ENCODE measurements at regions of chr13 and their contacts with region 1.

Region 1: DNA sequence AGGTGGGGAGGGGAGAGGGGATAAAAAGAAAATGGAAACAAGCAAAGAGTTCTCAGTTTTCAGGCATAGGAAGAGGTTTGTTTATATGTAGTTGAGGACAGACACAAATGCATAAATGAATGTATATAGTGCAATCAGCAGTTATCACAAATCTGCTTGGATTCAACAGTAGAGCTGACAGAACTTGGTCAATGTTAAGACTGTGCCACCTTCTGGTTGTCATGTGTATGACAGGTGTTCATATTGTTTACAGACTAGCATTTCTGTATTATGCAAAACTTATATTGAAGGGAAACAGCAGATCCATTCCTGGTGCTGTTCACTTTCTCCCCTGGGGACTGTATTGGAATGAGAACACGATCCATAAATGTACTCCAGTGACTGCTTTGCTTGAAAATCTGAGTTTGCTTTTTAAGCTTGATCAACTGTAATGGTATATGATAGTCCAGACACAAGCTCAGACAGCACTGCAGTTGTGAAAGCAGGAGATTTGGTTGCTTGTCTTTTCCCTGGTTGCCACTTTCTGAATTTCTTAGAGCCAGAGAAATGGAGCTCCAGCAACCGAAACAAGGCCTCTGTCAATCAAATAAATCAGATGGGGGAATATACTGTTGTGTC is 319.5 kb upstream of the OBI1 start:
- DNase-seq: peak; percentile 64
- ATAC-seq: peak; percentile 79
- H3K4me3 Mint-ChIP-seq: no peak overlapping the region
- H3K27ac Mint-ChIP-seq: no peak overlapping the region
- H3K4me1 Mint-ChIP-seq: no peaks in the 10 kb centered on the region
- H3K27me3 Mint-ChIP-seq: peaks cover 6% of the 10 kb centered on the region

Region 2: GRCh38 chr13:78137404-78138142 is 840.9 kb before region 1 on chr13:
- CTCF ChIA-PET with region 1: interaction called, 29 read pairs
- POLR2A ChIA-PET with region 1: no interaction called
- DNase-seq: peak; percentile 23
- ATAC-seq: peak; percentile 82
- H3K4me3 Mint-ChIP-seq: no peak overlapping the region
- H3K27ac Mint-ChIP-seq: no peak overlapping the region
- H3K4me1 Mint-ChIP-seq: peaks cover 6% of the 10 kb centered on the region
- H3K27me3 Mint-ChIP-seq: no peaks in the 10 kb centered on the region

Region 3: GRCh38 chr13:78241278-78241919 is 737.1 kb before region 1 on chr13:
- CTCF ChIA-PET with region 1: interaction called, 21 read pairs
- POLR2A ChIA-PET with region 1: no interaction called
- DNase-seq: peak; percentile 34
- ATAC-seq: no peak
- H3K4me3 Mint-ChIP-seq: no peak overlapping the region
- H3K27ac Mint-ChIP-seq: no peak overlapping the region
- H3K4me1 Mint-ChIP-seq: no peaks in the 10 kb centered on the region
- H3K27me3 Mint-ChIP-seq: no peaks in the 10 kb centered on the region

Region 4: DNA sequence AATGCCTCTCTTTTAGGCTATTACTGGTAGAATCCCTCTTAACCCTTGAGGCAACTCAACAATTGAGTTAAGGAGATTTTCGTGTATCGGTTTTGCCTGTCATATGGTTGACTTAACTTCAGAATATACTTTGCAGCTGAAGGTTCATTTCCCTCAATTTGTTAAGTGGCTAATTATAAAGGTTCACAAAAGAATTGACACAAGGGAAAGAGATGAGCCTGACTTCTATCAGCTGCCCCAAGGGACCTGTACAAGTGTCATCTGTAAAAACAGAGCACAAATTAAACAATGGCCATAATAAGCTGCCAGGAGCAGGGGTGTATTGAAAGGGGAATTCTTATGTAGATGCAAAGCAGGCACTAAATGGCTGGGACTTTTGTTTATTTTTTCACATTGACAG is 15.3 kb after region 1 on chr13:
- CTCF ChIA-PET with region 1: interaction called, 10 read pairs
- POLR2A ChIA-PET with region 1: no interaction called
- DNase-seq: no peak
- ATAC-seq: no peak
- H3K4me3 Mint-ChIP-seq: no peak overlapping the region
- H3K27ac Mint-ChIP-seq: no peak overlapping the region
- H3K4me1 Mint-ChIP-seq: no peaks in the 10 kb centered on the region
- H3K27me3 Mint-ChIP-seq: peaks cover 5% of the 10 kb centered on the region

Measured in activated CD8-positive, alpha-beta T cell treated with anti-CD3 and anti-CD28 coated beads, Interleukin-2, amount 10 ng/mL, durations not matched to agents 7 days and 5 days (primary cell).